ENCODE measurements at regions of chr11 and their contacts with region 1.

Region 1: DNA sequence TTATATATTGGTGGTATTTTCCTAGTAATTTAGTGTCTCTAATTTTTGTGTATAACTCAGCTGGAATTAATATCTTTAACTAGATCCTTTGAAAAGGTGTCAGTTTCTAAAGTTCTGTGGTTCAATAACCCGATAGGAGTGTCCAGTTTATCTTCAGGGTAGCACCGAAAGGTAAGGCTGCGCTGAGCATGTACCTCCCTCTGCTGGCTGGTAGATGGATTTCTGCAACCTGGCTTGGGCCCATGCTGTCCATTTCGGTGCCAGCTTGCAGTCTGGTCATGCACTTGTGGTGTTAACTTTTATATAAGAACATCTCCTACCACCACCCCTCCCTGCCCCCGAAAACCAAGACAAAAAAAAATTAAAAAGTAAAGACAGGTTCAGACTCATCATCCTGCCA is 24.7 kb downstream of the EXT2 start:
- DNase-seq: no peak
- ATAC-seq: no peak
- H3K4me3 Mint-ChIP-seq: no peak overlapping the region
- H3K27ac Mint-ChIP-seq: no peak overlapping the region
- H3K4me1 Mint-ChIP-seq: no peaks in the 10 kb centered on the region
- H3K27me3 Mint-ChIP-seq: no peaks in the 10 kb centered on the region
- CTCF ChIP-seq: no peak

Region 2: DNA sequence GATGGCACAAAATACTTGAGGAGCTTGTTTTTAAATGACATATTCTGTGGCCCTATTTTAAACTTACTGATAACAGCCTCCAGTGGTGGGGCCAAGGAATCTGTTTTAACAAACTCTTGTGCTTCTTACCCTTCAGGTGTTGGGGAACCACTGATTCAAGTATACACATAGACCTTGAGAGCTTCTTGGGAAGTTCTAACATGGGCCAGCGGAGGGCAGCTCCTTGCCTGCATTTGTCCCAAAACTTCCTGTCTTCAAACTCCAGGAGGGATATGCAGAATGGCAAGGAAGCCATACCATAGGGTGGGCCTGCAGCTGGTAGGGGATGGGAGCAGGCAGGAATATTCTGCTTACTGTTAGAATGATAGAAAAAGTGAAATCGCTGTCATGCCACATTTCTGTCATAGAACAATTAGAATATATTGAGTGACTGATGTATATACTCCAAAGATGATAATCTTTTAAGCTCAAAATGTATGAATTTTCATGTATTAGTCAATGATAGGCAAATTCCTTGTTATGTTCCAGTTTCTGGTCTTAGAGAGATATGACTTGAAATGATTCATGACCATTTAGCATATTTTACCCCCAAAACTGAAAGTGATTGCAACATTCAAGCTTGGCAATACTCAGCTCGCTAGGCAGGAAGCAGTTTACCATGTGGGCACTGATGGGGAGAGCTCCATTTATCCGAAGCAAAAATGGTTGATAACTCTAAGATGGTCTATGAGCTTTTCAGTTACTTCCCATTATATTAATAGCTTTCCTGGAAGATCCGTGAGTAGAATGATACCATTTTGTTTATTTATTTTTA is 15.5 kb before region 1 on chr11:
- CTCF ChIA-PET with region 1: interaction called, 14 read pairs
- POLR2A ChIA-PET with region 1: interaction called, 3 read pairs
- intact Hi-C with region 1: no loop called
- DNase-seq: no peak
- ATAC-seq: peak; percentile 71
- H3K4me3 Mint-ChIP-seq: no peak overlapping the region
- H3K27ac Mint-ChIP-seq: no peak overlapping the region
- H3K4me1 Mint-ChIP-seq: peaks cover 23% of the 10 kb centered on the region
- H3K27me3 Mint-ChIP-seq: no peaks in the 10 kb centered on the region
- CTCF ChIP-seq: no peak

Region 3: DNA sequence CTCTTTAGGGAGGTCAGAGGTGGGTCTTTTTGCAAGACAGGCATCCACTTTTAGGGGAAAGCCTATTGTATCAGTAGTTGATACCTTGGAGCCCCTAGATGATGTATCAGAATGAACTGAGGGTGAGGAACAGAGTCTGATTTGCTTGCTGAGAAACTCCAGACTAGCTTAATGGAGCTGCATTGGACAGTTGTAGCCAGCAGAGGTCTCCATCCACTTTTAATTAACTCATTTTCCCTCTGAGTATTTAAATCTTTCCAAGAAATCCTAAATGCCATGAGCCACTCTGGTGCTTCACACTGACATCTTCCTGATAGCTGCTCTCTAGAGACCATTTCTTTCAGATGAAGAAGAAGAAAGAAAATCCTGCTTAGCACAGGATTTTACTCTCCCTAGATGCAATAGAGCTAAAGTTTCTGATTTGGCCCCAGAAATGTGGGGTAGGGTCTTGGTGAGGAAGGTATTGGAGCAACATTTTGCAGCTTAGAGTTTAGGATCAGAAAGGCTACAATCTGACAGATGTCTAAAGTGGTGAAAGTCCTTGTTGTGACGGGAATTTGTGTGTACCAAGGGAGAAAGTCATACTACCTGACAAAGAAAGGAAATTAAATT is 13.3 kb after region 1 on chr11:
- CTCF ChIA-PET with region 1: interaction called, 14 read pairs
- POLR2A ChIA-PET with region 1: no interaction called
- intact Hi-C with region 1: no loop called
- DNase-seq: no peak
- ATAC-seq: no peak
- H3K4me3 Mint-ChIP-seq: no peak overlapping the region
- H3K27ac Mint-ChIP-seq: no peak overlapping the region
- H3K4me1 Mint-ChIP-seq: no peaks in the 10 kb centered on the region
- H3K27me3 Mint-ChIP-seq: no peaks in the 10 kb centered on the region
- CTCF ChIP-seq: peak; percentile 64

Measured in activated CD8-positive, alpha-beta T cell treated with anti-CD3 and anti-CD28 coated beads for 36 hours (primary cell).